ENCODE measurements at regions of chr14 and their contacts with region 1.

Region 1: DNA sequence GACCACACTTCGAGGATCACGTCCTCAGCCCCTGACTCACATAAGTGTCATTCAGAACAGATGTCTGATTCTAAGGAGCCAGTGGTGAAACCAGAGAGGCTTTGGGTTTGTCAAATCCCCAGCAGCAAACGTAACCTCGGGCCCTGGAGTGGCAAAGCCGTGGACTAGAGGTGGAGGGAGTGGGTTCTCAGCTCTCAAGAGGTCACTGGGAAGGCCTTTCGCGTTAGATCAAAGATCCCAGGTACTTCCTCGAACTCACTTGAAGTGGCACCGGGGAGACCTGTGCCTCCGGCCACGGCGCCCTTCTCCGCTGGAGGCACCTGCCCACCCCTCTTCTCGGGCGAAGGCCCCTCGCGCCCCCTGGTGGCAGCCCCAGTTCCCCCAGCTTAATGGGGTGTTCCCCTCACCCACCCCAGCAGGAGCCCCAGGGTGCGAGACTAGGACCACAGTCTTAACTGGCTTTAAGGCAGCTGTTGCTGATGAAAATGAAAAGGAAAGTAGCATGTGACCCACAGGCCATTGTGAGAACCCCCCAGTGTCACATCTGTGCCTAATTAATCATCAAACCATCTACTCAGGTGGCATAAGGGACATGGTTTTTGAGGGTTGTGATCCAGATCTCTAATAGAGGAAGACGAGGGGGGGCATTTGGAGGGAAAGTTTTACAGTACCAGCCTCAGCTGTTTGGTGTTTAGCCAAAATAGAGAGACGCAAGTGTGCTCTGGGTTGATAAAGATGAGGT is 672 bp upstream of the ESR2 start:
- DNase-seq: peak; percentile 30
- ATAC-seq: peak; percentile 93
- H3K4me3 ChIP-seq: peak overlapping the region; percentile 38 to 44
- H3K27ac ChIP-seq: no peak overlapping the region
- H3K4me1 ChIP-seq: no peaks in the 10 kb centered on the region; the same call in 1 of the 2 replicates
- H3K27me3 ChIP-seq: peaks cover 11% of the 10 kb centered on the region
- CTCF ChIP-seq: peak; percentile 91

Region 2: GRCh38 chr14:63800651-63801375 is 494.0 kb before region 1 on chr14:
- CTCF ChIA-PET with region 1: interaction called, 6 read pairs
- POLR2A ChIA-PET with region 1: no interaction called
- in situ Hi-C with region 1: no loop called
- intact Hi-C with region 1: loop called (anchors 2 kb)
- DNase-seq: no peak
- ATAC-seq: no peak
- H3K4me3 ChIP-seq: no peak overlapping the region
- H3K27ac ChIP-seq: no peak overlapping the region
- H3K4me1 ChIP-seq: peaks cover 4% of the 10 kb centered on the region
- H3K27me3 ChIP-seq: no peaks in the 10 kb centered on the region
- CTCF ChIP-seq: no peak

Region 3: DNA sequence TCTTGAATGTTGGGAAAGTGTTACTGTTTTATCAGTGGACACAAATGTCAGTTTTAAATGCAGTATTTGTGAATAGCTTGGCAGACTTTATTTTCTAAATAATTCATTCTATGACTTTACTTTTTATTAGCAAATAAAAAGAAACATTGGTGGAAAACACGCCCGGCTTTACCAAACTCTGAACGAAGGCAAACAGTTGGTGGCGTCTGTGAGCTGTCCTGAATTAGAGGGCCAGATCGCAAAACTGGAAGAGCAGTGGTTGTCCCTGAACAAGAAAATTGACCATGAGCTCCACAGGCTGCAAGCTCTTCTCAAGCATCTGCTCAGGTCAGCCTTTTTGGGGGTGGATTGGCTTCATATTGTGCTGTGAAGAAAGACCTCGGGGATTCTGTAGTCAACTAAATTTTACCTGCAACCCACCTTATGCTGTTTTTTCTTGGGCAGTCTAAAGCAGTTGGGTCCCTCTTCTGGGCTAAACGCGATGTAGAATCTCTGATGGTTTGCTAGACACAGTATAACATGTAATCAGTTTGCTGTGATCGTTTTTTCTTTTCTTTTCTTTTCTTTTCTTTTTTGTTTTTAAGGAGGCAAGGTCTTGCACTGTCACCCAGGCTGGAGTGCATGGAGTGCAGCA is 157.1 kb before region 1 on chr14:
- CTCF ChIA-PET with region 1: no interaction called
- POLR2A ChIA-PET with region 1: no interaction called
- in situ Hi-C with region 1: no loop called
- intact Hi-C with region 1: loop called (anchors 5 kb)
- DNase-seq: no peak
- ATAC-seq: no peak
- H3K4me3 ChIP-seq: no peak overlapping the region
- H3K27ac ChIP-seq: no peak overlapping the region
- H3K4me1 ChIP-seq: no peaks in the 10 kb centered on the region
- H3K27me3 ChIP-seq: no peaks in the 10 kb centered on the region
- CTCF ChIP-seq: peak; percentile 44

Measured in Panc1 (cell line).